ENCODE measurements at regions of chr5 and their contacts with region 1.

Region 1: DNA sequence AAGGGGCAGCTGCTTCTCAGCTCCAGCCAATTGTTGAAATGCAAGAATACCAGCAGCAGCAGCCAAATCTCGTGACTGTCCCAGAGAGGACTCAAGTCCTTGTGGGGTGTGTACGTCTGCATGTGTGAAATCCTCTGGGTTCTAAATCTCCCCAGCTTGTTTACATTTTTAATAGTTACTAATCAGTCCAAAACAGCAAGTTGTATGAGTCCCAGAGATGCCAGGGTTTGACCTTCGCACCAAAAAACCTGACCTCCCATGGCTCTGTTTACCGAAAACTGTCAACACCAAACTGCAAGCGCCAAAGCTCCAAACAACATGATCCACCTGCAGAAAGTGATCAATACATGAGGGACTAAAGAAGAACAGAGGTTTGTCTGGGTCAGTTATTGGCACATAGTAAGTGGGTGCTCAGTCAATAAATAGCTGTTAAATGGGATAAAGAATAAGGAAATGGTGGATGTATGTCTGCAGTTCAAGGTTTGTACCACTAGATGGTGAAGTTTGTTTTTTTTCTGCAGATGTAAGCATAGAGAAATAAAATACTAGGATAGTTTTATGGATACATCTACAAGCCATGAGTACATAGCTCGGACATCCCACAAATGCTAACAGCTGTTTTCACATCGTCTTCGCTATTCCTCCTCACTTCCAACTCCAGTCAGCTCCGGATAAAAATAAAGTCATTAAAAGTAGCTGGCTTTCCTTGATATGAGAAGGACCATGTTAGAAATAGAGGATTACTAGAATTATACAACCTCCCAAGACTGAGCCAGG is 85.3 kb upstream of the ADRB2 start:
- DNase-seq: no peak
- ATAC-seq: peak; percentile 38 to 81 (median 72)
- H3K4me3 ChIP-seq: peak overlapping the region in 1 of 10 donors; percentile 9
- H3K27ac ChIP-seq: peak overlapping the region in 1 of 10 donors; percentile 27
- H3K4me1 ChIP-seq: peaks cover 0 to 43% (median 29%) of the 10 kb centered on the region in 9 donors
- H3K27me3 ChIP-seq: no peaks in the 10 kb centered on the region
- CTCF ChIP-seq: peak; percentile 62 to 81 (median 77)

Region 2: DNA sequence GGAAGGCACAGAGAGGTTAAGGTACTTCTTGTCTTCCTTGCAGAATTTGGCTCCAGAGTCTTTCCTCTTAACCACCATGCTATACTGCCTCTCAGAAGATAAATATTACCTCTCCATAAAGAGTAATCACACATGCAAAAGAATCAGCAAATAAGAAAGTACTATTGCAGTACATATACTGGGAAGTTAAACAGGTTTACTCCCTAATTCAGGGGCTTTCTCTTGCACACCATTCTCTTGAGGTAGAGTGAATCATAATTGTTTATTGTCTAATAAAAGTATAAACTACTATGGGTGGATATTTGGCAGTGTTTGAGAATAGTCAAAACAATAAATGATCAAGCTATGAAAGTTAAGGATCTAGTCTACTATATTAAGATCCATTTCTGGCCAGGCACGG is 636.9 kb before region 1 on chr5:
- intact Hi-C with region 1: no loop called
- DNase-seq: no peak
- ATAC-seq: no peak
- H3K4me3 ChIP-seq: no peak overlapping the region
- H3K27ac ChIP-seq: no peak overlapping the region
- H3K4me1 ChIP-seq: no peaks in the 10 kb centered on the region
- H3K27me3 ChIP-seq: no peaks in the 10 kb centered on the region
- CTCF ChIP-seq: no peak

Region 3: GRCh38 chr5:148826053-148826738 is 85.0 kb after region 1 on chr5 and contains the start of gene ADRB2:
- intact Hi-C with region 1: loop called in 4 of 10 experiments (anchors 5 to 10 kb)
- DNase-seq: peak; percentile 94 to 96
- ATAC-seq: peak; percentile 94 to 99 (median 97)
- H3K4me3 ChIP-seq: peak within 1 kb of the TSS; percentile 47 to 76 (median 68)
- H3K27ac ChIP-seq: peak within 1 kb of the TSS; percentile 77 to 97 (median 94)
- H3K4me1 ChIP-seq: peaks cover 0 to 82% (median 31%) of the 10 kb centered on the region in 9 donors
- H3K27me3 ChIP-seq: no peaks in the 10 kb centered on the region
- CTCF ChIP-seq: peak in 2 of 9 donors; percentile 4 to 17
- total RNA-seq, gene ADRB2: 3.5 to 7.8 (median 4.5) TPM

Region 4: GRCh38 chr5:148963664-148964063 is 222.5 kb after region 1 on chr5:
- intact Hi-C with region 1: loop called in 7 of 10 experiments (anchors 2 to 5 kb)
- DNase-seq: no peak
- ATAC-seq: no peak
- H3K4me3 ChIP-seq: no peak overlapping the region
- H3K27ac ChIP-seq: peak overlapping the region in 1 of 10 donors; percentile 82
- H3K4me1 ChIP-seq: peaks cover 3 to 41% (median 7%) of the 10 kb centered on the region in 9 donors
- H3K27me3 ChIP-seq: no peaks in the 10 kb centered on the region
- CTCF ChIP-seq: no peak

Region 5: DNA sequence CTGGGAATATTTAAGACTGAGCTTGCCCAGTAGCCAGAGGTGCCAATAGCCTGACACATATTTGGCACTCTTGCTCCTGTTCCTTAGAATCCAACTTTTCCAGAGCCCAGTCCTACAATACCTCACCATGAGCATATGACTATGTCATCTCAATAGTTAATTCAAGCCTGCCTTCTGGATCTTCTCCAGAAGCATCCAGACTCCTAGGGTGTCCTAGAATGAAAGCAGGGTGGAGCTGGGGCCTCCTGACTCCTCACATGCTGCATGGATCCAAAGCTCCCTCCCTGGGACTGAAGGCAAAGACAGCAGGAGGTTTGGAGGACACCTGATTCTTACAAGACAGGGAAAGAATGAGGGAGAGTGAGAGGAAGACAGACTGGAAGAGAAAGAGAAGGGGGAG is 283.8 kb after region 1 on chr5:
- intact Hi-C with region 1: loop called in 2 of 10 experiments (anchors 5 to 10 kb)
- DNase-seq: no peak
- ATAC-seq: peak in 1 of 8 donors; percentile 11
- H3K4me3 ChIP-seq: no peak overlapping the region
- H3K27ac ChIP-seq: no peak overlapping the region
- H3K4me1 ChIP-seq: peaks cover 0 to 13% (median 10%) of the 10 kb centered on the region in 9 donors
- H3K27me3 ChIP-seq: no peaks in the 10 kb centered on the region
- CTCF ChIP-seq: no peak

Measured in heart right ventricle (tissue), 16 donors.